HCT116 (cell line): ENCODE measurements at regions of chr13 and their contacts with region 1.

Region 1: DNA sequence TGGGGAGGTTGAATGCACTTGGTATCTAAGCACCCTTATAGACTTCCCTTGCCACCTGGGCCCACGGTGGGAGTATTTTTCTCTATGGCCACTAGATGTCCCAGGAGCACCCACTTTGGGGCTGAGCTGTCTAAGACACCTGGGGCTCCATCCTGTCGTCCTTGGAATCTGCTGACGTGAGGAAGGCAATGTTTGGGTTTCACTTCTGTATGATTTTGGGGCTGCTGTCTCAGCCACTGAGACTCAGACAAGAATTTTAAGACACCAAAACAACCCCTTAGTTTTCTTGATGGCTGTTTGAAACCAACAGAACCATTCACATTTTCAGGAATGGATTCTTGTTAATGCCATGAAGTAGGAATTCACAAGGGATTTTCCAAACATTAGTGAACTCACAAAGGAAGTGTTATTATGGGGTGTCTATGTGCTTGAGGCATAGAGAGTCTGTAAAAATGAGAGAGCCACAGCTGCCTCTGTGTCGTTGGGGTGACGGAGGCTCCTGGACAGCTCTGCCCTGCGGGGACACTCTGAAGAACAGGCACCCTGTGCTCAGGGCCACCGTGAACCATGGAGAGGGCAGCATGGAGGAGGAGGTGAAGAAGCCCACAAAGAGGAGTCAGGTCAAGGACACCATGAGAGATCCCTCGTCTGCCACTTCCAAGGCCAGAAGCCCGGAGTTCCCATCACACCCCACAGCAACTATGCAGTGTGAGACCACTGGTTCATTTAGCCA is 106.8 kb upstream of the SPATA13 start:
- DNase-seq: peak; percentile 81
- ATAC-seq: peak; percentile 100
- H3K4me3 ChIP-seq: peak overlapping the region in 1 of 2 experiments; percentile 29; a peak in 1 of 4 replicates
- H3K27ac ChIP-seq: 0 out of 2 replicates have a peak overlapping the region, but pooled peaks have one; percentile 17
- H3K4me1 ChIP-seq: peaks cover 11 to 19% of the 10 kb centered on the region in 2 experiments
- H3K27me3 ChIP-seq: no peaks in the 10 kb centered on the region
- CTCF ChIP-seq: peak; percentile 79 to 83 (median 82)
- POLR2A ChIP-seq: no peak
- RAD21 ChIP-seq: peak; percentile 91

Region 2: DNA sequence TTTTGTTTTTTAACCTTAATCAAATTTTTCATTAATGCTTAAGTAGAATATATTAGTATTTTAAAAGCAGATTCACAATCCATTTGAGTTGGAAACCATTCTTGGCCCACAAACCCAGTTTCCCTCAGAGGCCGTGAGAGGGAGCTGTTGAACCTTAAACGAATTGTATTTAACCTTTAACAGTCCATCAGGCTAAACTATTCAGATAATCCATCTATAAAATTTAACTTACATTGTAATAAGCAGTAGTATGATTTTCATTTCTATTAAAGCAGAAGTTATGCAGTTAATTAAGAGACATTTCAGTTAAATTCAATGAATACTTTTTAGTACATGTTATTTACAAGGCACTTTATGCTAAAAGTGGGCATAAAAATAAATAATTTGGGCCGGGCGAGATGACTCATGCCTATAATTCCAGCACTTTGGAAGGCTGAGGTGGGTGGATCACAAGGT is 33.3 kb before region 1 on chr13:
- CTCF ChIA-PET with region 1: interaction called, 10 read pairs
- POLR2A ChIA-PET with region 1: no interaction called
- RAD21 ChIA-PET with region 1: interaction called, 3 read pairs
- intact Hi-C with region 1: no loop called
- DNase-seq: peak; percentile 64
- ATAC-seq: peak; percentile 84
- H3K4me3 ChIP-seq: no peak overlapping the region
- H3K27ac ChIP-seq: no peak overlapping the region
- H3K4me1 ChIP-seq: no peaks in the 10 kb centered on the region
- H3K27me3 ChIP-seq: no peaks in the 10 kb centered on the region
- CTCF ChIP-seq: peak; percentile 70 to 81 (median 81); a peak in 5 of 6 replicates
- POLR2A ChIP-seq: no peak
- RAD21 ChIP-seq: peak; percentile 80

Region 3: GRCh38 chr13:24040835-24041234 is 12.8 kb before region 1 on chr13:
- CTCF ChIA-PET with region 1: interaction called, 10 read pairs
- POLR2A ChIA-PET with region 1: no interaction called
- RAD21 ChIA-PET with region 1: no interaction called
- intact Hi-C with region 1: no loop called
- DNase-seq: no peak
- ATAC-seq: no peak
- H3K4me3 ChIP-seq: no peak overlapping the region
- H3K27ac ChIP-seq: no peak overlapping the region
- H3K4me1 ChIP-seq: no peaks in the 10 kb centered on the region
- H3K27me3 ChIP-seq: no peaks in the 10 kb centered on the region
- CTCF ChIP-seq: no peak
- POLR2A ChIP-seq: no peak
- RAD21 ChIP-seq: no peak

Region 4: GRCh38 chr13:24148399-24149305 is 95.0 kb after region 1 on chr13:
- CTCF ChIA-PET with region 1: interaction called, 3 read pairs
- POLR2A ChIA-PET with region 1: no interaction called
- RAD21 ChIA-PET with region 1: no interaction called
- intact Hi-C with region 1: loop called (anchors 10 kb)
- DNase-seq: peak; percentile 96
- ATAC-seq: peak; percentile 94
- H3K4me3 ChIP-seq: peak overlapping the region; percentile 2 to 28
- H3K27ac ChIP-seq: peak overlapping the region; percentile 70
- H3K4me1 ChIP-seq: peaks cover 22 to 40% of the 10 kb centered on the region in 2 experiments
- H3K27me3 ChIP-seq: no peaks in the 10 kb centered on the region
- CTCF ChIP-seq: 0 out of 6 replicates have a peak, but pooled peaks of 1 of the 3 experiments have one; percentile 12
- POLR2A ChIP-seq: no peak
- RAD21 ChIP-seq: peak; percentile 34

Region 5: GRCh38 chr13:24160454-24161009 is 106.8 kb after region 1 on chr13 and contains the start of gene SPATA13:
- CTCF ChIA-PET with region 1: interaction called, 3 read pairs
- POLR2A ChIA-PET with region 1: interaction called, 4 read pairs
- RAD21 ChIA-PET with region 1: interaction called in 1 of 2 experiments, 3 read pairs
- intact Hi-C with region 1: loop called (anchors 2 kb)
- DNase-seq: peak; percentile 75
- ATAC-seq: peak; percentile 84
- H3K4me3 ChIP-seq: peak within 1 kb of the TSS; percentile 88 to 94
- H3K27ac ChIP-seq: peak within 1 kb of the TSS; percentile 72
- H3K4me1 ChIP-seq: peaks cover 23 to 24% of the 10 kb centered on the region in 2 experiments
- H3K27me3 ChIP-seq: no peaks in the 10 kb centered on the region
- CTCF ChIP-seq: no peak
- POLR2A ChIP-seq: peak; percentile 36
- RAD21 ChIP-seq: no peak
- total RNA-seq, gene SPATA13: 21.4 TPM

Region 6: GRCh38 chr13:24220086-24220703 is 166.5 kb after region 1 on chr13:
- CTCF ChIA-PET with region 1: interaction called, 38 read pairs
- POLR2A ChIA-PET with region 1: no interaction called
- RAD21 ChIA-PET with region 1: interaction called, 3 to 5 read pairs
- intact Hi-C with region 1: loop called (anchors 1 kb)
- DNase-seq: peak; percentile 70
- ATAC-seq: peak; percentile 94
- H3K4me3 ChIP-seq: no peak overlapping the region
- H3K27ac ChIP-seq: no peak overlapping the region
- H3K4me1 ChIP-seq: peaks cover 11 to 13% of the 10 kb centered on the region in 2 experiments; a peak in 3 of 4 replicates
- H3K27me3 ChIP-seq: no peaks in the 10 kb centered on the region
- CTCF ChIP-seq: peak; percentile 69 to 83 (median 81)
- POLR2A ChIP-seq: no peak
- RAD21 ChIP-seq: peak; percentile 91

Region 7: GRCh38 chr13:24228852-24229458 is 175.3 kb after region 1 on chr13:
- CTCF ChIA-PET with region 1: interaction called, 11 read pairs
- POLR2A ChIA-PET with region 1: no interaction called
- RAD21 ChIA-PET with region 1: interaction called, 3 to 4 read pairs
- intact Hi-C with region 1: no loop called
- DNase-seq: peak; percentile 57
- ATAC-seq: peak; percentile 61
- H3K4me3 ChIP-seq: no peak overlapping the region
- H3K27ac ChIP-seq: no peak overlapping the region
- H3K4me1 ChIP-seq: peaks cover 0 to 2% of the 10 kb centered on the region in 2 experiments; a peak in 1 of 4 replicates
- H3K27me3 ChIP-seq: no peaks in the 10 kb centered on the region
- CTCF ChIP-seq: peak; percentile 48 to 91 (median 90); a peak in 5 of 6 replicates
- POLR2A ChIP-seq: no peak
- RAD21 ChIP-seq: peak; percentile 58

Region 8: GRCh38 chr13:25687471-25688225 is 1634.0 kb after region 1 on chr13:
- CTCF ChIA-PET with region 1: no interaction called
- POLR2A ChIA-PET with region 1: no interaction called
- RAD21 ChIA-PET with region 1: no interaction called
- intact Hi-C with region 1: no loop called
- DNase-seq: no peak
- ATAC-seq: no peak
- H3K4me3 ChIP-seq: no peak overlapping the region
- H3K27ac ChIP-seq: no peak overlapping the region
- H3K4me1 ChIP-seq: no peaks in the 10 kb centered on the region
- H3K27me3 ChIP-seq: peaks cover 35% of the 10 kb centered on the region
- CTCF ChIP-seq: no peak
- POLR2A ChIP-seq: no peak
- RAD21 ChIP-seq: no peak